ENCODE measurements at regions of chr3 and their contacts with region 1.

Region 1: DNA sequence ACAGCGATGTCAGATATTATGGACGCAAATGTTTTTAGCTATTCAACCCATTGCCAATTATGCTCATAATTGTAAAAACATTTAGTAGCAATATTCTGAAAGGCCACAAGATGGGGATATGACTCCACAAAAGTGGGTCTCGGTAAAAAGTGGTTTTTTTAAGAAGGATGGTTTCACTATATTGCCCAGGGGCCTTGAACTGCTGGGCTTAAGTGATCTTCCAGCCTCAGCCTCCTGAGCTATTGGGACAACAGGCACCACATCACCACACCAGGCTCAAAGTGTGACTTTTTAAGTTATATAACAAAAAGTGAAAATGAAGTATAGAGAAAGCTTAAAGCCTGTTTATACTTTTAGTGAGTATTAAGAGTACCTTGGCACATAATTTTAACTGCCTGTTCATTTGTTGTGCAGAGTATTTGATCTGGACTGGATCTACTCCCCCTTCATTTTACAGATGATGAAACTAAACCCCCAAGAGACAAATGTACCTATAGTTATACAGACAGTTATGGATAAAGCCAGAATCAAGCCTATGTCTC is 9.4 kb downstream of the NAA50 start:
- DNase-seq: peak; percentile 12
- H3K4me3 Mint-ChIP-seq: no peak overlapping the region
- H3K27ac Mint-ChIP-seq: no peak overlapping the region
- H3K4me1 Mint-ChIP-seq: peaks cover 19% of the 10 kb centered on the region
- H3K27me3 Mint-ChIP-seq: no peaks in the 10 kb centered on the region

Region 2: GRCh38 chr3:113795693-113796092 is 59.1 kb after region 1 on chr3:
- intact Hi-C with region 1: loop called (anchors 1 kb)
- DNase-seq: no peak
- H3K4me3 Mint-ChIP-seq: no peak overlapping the region
- H3K27ac Mint-ChIP-seq: no peak overlapping the region
- H3K4me1 Mint-ChIP-seq: no peaks in the 10 kb centered on the region
- H3K27me3 Mint-ChIP-seq: no peaks in the 10 kb centered on the region

Region 3: GRCh38 chr3:113844622-113845222 is 108.1 kb after region 1 on chr3:
- intact Hi-C with region 1: no loop called
- DNase-seq: no peak
- H3K4me3 Mint-ChIP-seq: no peak overlapping the region
- H3K27ac Mint-ChIP-seq: no peak overlapping the region
- H3K4me1 Mint-ChIP-seq: no peaks in the 10 kb centered on the region
- H3K27me3 Mint-ChIP-seq: peaks cover 4% of the 10 kb centered on the region

Region 4: DNA sequence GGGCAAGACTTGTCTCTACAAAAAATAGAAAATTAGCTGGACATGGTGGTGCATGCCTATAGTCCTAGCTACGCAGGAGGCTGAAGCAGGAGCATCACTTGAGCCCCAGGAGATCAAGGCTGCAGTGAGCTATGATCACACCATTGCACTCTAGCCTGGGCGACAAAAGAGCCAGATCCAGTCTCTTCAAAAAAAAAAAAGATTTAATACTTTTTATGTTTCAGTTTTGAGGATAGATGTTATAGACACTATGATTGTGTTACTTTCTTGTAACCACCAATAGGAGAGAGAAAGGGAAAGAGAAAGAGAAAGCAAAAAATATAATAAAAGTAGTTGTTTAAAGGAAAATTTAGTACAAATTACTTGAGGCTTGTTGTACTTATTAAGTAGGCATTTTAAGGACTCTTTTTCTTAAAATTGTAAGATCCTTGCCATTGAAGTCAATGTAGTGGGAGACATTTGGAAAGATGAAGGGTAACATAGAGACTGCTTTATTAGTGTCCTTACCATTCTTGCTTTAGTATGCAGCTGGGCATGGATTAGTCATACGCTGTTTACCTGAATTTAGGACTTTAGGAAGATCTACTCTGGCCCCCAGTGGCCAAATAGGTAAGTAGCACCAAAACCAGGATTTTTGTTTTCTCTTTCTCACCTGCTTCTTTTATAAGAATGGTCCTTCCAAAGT is 176.1 kb after region 1 on chr3:
- intact Hi-C with region 1: loop called (anchors 1 kb)
- DNase-seq: peak; percentile 8
- H3K4me3 Mint-ChIP-seq: no peak overlapping the region
- H3K27ac Mint-ChIP-seq: no peak overlapping the region
- H3K4me1 Mint-ChIP-seq: peaks cover 7% of the 10 kb centered on the region
- H3K27me3 Mint-ChIP-seq: no peaks in the 10 kb centered on the region